ENCODE measurements at regions of chr18 and their contacts with region 1.

Region 1: DNA sequence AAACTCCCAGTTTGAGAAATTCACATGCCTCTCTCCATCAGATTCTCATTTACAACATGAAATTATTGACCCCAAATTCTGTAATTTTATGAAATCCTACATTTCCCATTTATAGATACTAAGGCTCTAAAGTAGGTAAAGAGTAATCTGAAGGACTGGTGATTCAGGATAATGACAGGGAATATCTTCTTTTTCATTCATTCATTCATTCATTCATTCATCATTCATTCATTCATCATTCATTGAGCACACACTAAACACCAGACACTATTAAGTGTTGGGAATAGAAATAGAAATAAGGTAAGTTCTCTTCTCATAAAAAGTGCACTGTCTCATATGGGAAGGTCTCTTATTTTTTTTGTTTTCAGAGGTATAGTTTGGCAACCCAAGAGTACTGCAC is 116.9 kb downstream of the TGIF1 start:
- DNase-seq: no peak
- ATAC-seq: no peak
- H3K4me3 ChIP-seq: no peak overlapping the region
- H3K4me3 Mint-ChIP-seq: no peak overlapping the region
- H3K27ac ChIP-seq: no peak overlapping the region
- H3K27ac Mint-ChIP-seq: no peak overlapping the region
- H3K4me1 ChIP-seq: no peaks in the 10 kb centered on the region
- H3K4me1 Mint-ChIP-seq: no peaks in the 10 kb centered on the region
- H3K27me3 ChIP-seq: no peaks in the 10 kb centered on the region
- H3K27me3 Mint-ChIP-seq: peaks cover 7 to 13% of the 10 kb centered on the region in 2 donors
- CTCF ChIP-seq: no peak

Region 2: GRCh38 chr18:3538954-3539617 is 27.8 kb before region 1 on chr18:
- intact Hi-C with region 1: loop called (anchors 1 kb)
- DNase-seq: no peak
- ATAC-seq: no peak
- H3K4me3 ChIP-seq: no peak overlapping the region
- H3K4me3 Mint-ChIP-seq: no peak overlapping the region
- H3K27ac ChIP-seq: no peak overlapping the region
- H3K27ac Mint-ChIP-seq: no peak overlapping the region
- H3K4me1 ChIP-seq: no peaks in the 10 kb centered on the region
- H3K4me1 Mint-ChIP-seq: no peaks in the 10 kb centered on the region
- H3K27me3 ChIP-seq: no peaks in the 10 kb centered on the region
- H3K27me3 Mint-ChIP-seq: peaks cover 3 to 24% of the 10 kb centered on the region in 2 donors
- CTCF ChIP-seq: no peak